K562 (cell line): ENCODE measurements at regions of chr9 and their contacts with region 1.

Region 1: GRCh38 chr9:69564557-69564956 is 107.6 kb downstream of the APBA1 start:
- DNase-seq: no peak
- ATAC-seq: no peak
- H3K4me3 ChIP-seq: no peak overlapping the region
- H3K27ac ChIP-seq: no peak overlapping the region
- H3K4me1 ChIP-seq: no peaks in the 10 kb centered on the region
- H3K27me3 ChIP-seq: peaks cover 0 to 8% of the 10 kb centered on the region in 2 experiments; a peak in 1 of 5 replicates
- CTCF ChIP-seq: no peak
- EP300 ChIP-seq: no peak
- POLR2A ChIP-seq: no peak
- RAD21 ChIP-seq: no peak

Region 2: DNA sequence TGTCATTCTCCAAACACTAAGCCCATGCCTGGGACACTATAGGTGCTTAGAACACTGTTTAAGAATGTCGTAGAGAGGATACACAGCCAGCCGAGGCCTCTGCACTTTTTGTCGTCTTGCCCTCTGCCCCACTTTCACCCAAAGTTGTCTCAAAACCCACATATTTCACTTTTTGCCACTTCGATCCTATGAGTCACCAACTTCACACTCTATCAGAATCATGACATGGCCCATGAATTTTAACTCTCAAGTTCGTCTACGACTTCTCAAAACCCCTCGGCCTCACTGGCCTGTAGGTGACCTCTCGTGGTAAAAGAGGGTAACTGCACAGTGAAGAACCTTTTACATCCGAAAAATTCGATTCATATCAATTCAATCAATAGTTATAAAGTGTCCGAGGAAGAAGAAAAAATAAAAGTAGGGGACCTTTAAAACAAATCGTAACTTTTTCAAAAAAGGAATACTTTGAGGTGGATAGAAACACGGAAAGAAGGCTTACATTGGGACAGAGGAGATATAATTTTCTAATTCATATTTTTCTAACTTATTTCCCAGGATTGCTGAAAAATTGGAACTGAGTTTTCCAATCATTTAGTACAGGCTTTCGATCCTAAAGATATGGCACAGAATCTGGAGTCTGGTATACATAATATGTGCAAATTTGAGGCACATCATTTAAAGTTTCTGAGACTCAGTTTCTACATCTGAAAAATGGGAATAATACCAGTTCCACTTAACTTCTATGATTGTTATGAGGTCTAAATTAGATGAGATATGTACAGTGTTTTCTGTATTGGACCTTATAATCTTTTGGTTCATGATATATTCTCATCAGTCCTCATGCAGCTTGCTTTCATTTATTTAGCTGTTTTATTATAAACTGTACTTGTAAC is 15.0 kb before region 1 on chr9:
- CTCF ChIA-PET with region 1: no interaction called
- POLR2A ChIA-PET with region 1: no interaction called
- in situ Hi-C with region 1: no loop called
- intact Hi-C with region 1: no loop called
- DNase-seq: peak; percentile 26 to 32 (median 29)
- ATAC-seq: peak; percentile 56; the same call in 2 of the 3 replicates
- H3K4me3 ChIP-seq: no peak overlapping the region
- H3K27ac ChIP-seq: no peak overlapping the region
- H3K4me1 ChIP-seq: no peaks in the 10 kb centered on the region
- H3K27me3 ChIP-seq: peaks cover 0 to 8% of the 10 kb centered on the region in 2 experiments; a peak in 1 of 5 replicates
- CTCF ChIP-seq: peak; percentile 55 to 67 (median 62)
- EP300 ChIP-seq: no peak
- POLR2A ChIP-seq: no peak
- RAD21 ChIP-seq: peak; percentile 59 to 67

Region 3: GRCh38 chr9:69861005-69861404 is 296.4 kb after region 1 on chr9:
- CTCF ChIA-PET with region 1: no interaction called
- POLR2A ChIA-PET with region 1: no interaction called
- in situ Hi-C with region 1: no loop called
- intact Hi-C with region 1: no loop called
- DNase-seq: no peak
- ATAC-seq: no peak
- H3K4me3 ChIP-seq: no peak overlapping the region
- H3K27ac ChIP-seq: no peak overlapping the region
- H3K4me1 ChIP-seq: no peaks in the 10 kb centered on the region
- H3K27me3 ChIP-seq: no peaks in the 10 kb centered on the region
- CTCF ChIP-seq: no peak
- EP300 ChIP-seq: no peak
- POLR2A ChIP-seq: no peak
- RAD21 ChIP-seq: no peak

Region 4: DNA sequence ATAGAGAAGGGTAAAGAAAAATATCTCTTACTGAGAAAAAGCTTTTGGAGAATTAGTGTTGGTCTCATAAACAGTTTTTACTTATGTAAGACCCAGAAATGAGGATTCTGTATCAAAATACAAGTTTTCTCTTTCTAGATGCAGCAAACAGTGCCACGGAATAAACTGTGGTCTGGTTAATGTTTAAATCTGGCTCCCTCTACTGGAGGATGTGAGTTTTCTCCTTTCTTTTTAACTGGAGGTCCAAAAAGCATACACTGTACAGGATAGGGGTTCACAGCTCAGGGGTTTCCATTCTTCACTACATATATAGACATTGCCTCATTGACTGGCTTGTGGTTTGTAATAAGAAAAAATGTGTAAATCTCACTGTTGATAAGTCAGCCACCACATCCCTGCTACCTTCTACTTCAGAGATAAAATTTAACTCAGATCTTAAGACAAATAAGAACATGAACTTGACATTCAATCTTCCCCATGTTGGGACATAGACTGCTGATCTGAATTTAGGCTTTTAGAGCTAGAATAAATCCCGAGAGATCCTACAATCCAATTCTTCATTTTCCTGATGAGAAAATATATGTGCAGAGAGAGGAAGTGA is 355.0 kb after region 1 on chr9:
- CTCF ChIA-PET with region 1: no interaction called
- POLR2A ChIA-PET with region 1: no interaction called
- in situ Hi-C with region 1: no loop called
- intact Hi-C with region 1: loop called (anchors 10 kb)
- DNase-seq: peak; percentile 21 to 41 (median 30)
- ATAC-seq: peak; percentile 83
- H3K4me3 ChIP-seq: no peak overlapping the region
- H3K27ac ChIP-seq: no peak overlapping the region
- H3K4me1 ChIP-seq: no peaks in the 10 kb centered on the region
- H3K27me3 ChIP-seq: peaks cover 0 to 5% of the 10 kb centered on the region in 2 experiments; a peak in 1 of 5 replicates
- CTCF ChIP-seq: peak; percentile 48 to 60 (median 59); a peak in 5 of 6 replicates
- EP300 ChIP-seq: no peak
- POLR2A ChIP-seq: no peak
- RAD21 ChIP-seq: peak; percentile 40 to 64